Sigmoid colon (tissue), 7 donors: ENCODE measurements at regions of chr16 and their contacts with region 1.

Region 1: GRCh38 chr16:20806168-20807050 is at the starts of genes ERI2 and REXO5:
- DNase-seq: peak; percentile 95
- H3K4me3 ChIP-seq: peak within 1 kb of the TSS; percentile 73 to 87 (median 80)
- H3K27ac ChIP-seq: peak within 1 kb of the TSS; percentile 81 to 95 (median 92)
- H3K4me1 ChIP-seq: peaks cover 0 to 16% (median 13%) of the 10 kb centered on the region in 4 donors
- H3K27me3 ChIP-seq: no peaks in the 10 kb centered on the region
- CTCF ChIP-seq: peak in 2 of 4 experiments; percentile 5 to 34
- EP300 ChIP-seq: no peak
- POLR2A ChIP-seq: peak in 1 of 2 donors; percentile 36
- total RNA-seq, gene ERI2: 7.2 to 19.3 (median 16.6) TPM
- total RNA-seq, gene REXO5: 1.8 to 7.5 (median 3.0) TPM

Region 2: GRCh38 chr16:20741554-20742285 is 64.7 kb before region 1 on chr16 and contains the start of gene THUMPD1:
- intact Hi-C with region 1: loop called (anchors 5 kb)
- DNase-seq: peak; percentile 98
- H3K4me3 ChIP-seq: peak within 1 kb of the TSS; percentile 66 to 99 (median 90)
- H3K27ac ChIP-seq: peak within 1 kb of the TSS; percentile 92 to 100 (median 98)
- H3K4me1 ChIP-seq: peaks cover 0 to 34% (median 25%) of the 10 kb centered on the region in 4 donors
- H3K27me3 ChIP-seq: no peaks in the 10 kb centered on the region
- CTCF ChIP-seq: no peak
- EP300 ChIP-seq: no peak
- POLR2A ChIP-seq: peak; percentile 93 to 94
- total RNA-seq, gene THUMPD1: 59.3 to 115 (median 112) TPM

Region 3: DNA sequence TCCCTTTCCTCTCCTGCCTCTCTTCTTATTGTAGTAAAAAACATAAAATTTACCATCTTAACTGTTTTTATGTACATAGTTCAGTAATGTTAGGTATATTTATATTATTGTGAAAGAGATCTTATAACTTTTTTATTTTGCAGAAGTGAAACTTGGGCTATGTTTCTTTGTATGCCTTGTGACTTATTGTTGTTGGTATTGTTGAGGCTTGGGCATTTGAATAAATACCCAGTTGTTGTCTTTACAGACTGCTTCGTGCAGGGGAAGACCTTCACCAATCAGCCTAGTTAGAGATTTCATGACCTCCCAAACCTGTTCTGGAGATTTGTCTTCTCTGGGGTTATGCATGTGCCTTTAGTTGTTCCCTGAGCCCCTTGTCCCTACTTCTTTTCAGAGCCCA is 31.8 kb after region 1 on chr16:
- intact Hi-C with region 1: no loop called
- DNase-seq: no peak
- H3K4me3 ChIP-seq: no peak overlapping the region
- H3K27ac ChIP-seq: no peak overlapping the region
- H3K4me1 ChIP-seq: no peaks in the 10 kb centered on the region
- H3K27me3 ChIP-seq: no peaks in the 10 kb centered on the region
- CTCF ChIP-seq: no peak
- EP300 ChIP-seq: no peak
- POLR2A ChIP-seq: no peak

Region 4: GRCh38 chr16:20849587-20850390 is 43.4 kb after region 1 on chr16:
- intact Hi-C with region 1: loop called (anchors 2 kb)
- DNase-seq: peak; percentile 84
- H3K4me3 ChIP-seq: no peak overlapping the region
- H3K27ac ChIP-seq: peak overlapping the region; percentile 79 to 90 (median 82)
- H3K4me1 ChIP-seq: peaks cover 0 to 49% (median 43%) of the 10 kb centered on the region in 4 donors
- H3K27me3 ChIP-seq: no peaks in the 10 kb centered on the region
- CTCF ChIP-seq: peak; percentile 88 to 99 (median 98)
- EP300 ChIP-seq: no peak
- POLR2A ChIP-seq: no peak